MCF 10A (cell line): ENCODE measurements at regions of chr19 and their contacts with region 1.

Region 1: DNA sequence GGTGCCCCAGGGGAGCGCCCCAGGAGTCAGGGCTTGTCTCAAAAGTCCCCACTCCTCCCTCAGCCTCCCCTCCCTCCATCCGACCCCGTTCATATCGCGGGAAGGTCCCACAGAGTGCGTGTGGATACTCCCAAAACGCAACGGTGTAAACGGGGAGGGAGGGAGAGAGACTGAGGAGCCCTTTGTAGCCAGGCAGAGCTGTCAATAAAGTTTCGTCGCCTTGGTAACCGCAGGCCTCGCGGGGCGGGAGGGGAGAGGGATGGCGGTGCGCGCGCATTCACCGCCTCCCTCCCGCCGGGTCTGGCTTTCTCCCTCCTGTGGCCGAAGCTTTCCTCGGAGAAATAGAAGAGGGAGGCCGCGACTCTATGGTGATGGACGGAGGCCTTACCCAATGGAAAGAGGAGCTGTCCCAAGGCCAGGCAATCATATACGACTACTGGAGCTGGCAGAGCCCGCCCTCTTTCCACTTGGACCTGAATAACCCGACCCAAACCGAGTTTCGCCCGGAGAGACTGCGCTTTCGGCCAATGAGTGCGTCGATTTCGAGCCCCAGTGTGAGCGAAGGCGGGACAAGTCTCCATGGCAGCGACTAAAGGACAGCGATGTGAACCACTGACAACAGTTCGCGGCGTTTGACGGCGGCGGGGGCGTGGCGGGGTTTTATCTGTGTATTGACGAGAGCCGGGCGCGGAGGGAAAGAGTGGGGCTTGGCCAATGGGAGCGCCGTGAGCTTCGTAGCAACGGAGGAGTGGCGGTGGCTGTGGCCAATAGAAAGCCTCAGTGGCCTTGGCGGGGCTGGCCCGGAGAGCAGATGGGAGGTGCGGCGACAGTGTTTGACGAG is at the start of gene KMT5C:
- DNase-seq: peak; percentile 100
- H3K4me3 Mint-ChIP-seq: peak within 1 kb of the TSS; percentile 80
- H3K27ac Mint-ChIP-seq: peak within 1 kb of the TSS; percentile 100
- H3K4me1 Mint-ChIP-seq: peaks cover 33% of the 10 kb centered on the region
- H3K27me3 Mint-ChIP-seq: no peaks in the 10 kb centered on the region
- CTCF ChIP-seq: no peak
- total RNA-seq, gene KMT5C: 12.9 and 16.8 TPM in 2 replicates

Region 2: GRCh38 chr19:55289117-55289796 is 50.0 kb before region 1 on chr19:
- CTCF ChIA-PET with region 1: interaction called, 33 read pairs
- POLR2A ChIA-PET with region 1: interaction called, 13 read pairs
- intact Hi-C with region 1: no loop called
- DNase-seq: no peak
- H3K4me3 Mint-ChIP-seq: no peak overlapping the region
- H3K27ac Mint-ChIP-seq: no peak overlapping the region
- H3K4me1 Mint-ChIP-seq: peaks cover 5% of the 10 kb centered on the region
- H3K27me3 Mint-ChIP-seq: no peaks in the 10 kb centered on the region
- CTCF ChIP-seq: no peak

Region 3: GRCh38 chr19:55325172-55325571 is 14.1 kb before region 1 on chr19 and contains the start of gene TMEM150B:
- CTCF ChIA-PET with region 1: interaction called, 5 read pairs
- POLR2A ChIA-PET with region 1: interaction called, 13 read pairs
- intact Hi-C with region 1: no loop called
- DNase-seq: no peak
- H3K4me3 Mint-ChIP-seq: no peak within 1 kb of the TSS
- H3K27ac Mint-ChIP-seq: no peak within 1 kb of the TSS
- H3K4me1 Mint-ChIP-seq: peaks cover 12% of the 10 kb centered on the region
- H3K27me3 Mint-ChIP-seq: peaks cover 27% of the 10 kb centered on the region
- CTCF ChIP-seq: no peak
- total RNA-seq, gene TMEM150B: not detected in 2 replicates

Region 4: GRCh38 chr19:55369671-55370304 is 30.5 kb after region 1 on chr19:
- CTCF ChIA-PET with region 1: interaction called, 4 read pairs
- POLR2A ChIA-PET with region 1: interaction called, 10 read pairs
- intact Hi-C with region 1: no loop called
- DNase-seq: peak; percentile 56
- H3K4me3 Mint-ChIP-seq: peak overlapping the region; percentile 78
- H3K27ac Mint-ChIP-seq: no peak overlapping the region
- H3K4me1 Mint-ChIP-seq: peaks cover 22% of the 10 kb centered on the region
- H3K27me3 Mint-ChIP-seq: peaks cover 28% of the 10 kb centered on the region
- CTCF ChIP-seq: no peak

Region 5: DNA sequence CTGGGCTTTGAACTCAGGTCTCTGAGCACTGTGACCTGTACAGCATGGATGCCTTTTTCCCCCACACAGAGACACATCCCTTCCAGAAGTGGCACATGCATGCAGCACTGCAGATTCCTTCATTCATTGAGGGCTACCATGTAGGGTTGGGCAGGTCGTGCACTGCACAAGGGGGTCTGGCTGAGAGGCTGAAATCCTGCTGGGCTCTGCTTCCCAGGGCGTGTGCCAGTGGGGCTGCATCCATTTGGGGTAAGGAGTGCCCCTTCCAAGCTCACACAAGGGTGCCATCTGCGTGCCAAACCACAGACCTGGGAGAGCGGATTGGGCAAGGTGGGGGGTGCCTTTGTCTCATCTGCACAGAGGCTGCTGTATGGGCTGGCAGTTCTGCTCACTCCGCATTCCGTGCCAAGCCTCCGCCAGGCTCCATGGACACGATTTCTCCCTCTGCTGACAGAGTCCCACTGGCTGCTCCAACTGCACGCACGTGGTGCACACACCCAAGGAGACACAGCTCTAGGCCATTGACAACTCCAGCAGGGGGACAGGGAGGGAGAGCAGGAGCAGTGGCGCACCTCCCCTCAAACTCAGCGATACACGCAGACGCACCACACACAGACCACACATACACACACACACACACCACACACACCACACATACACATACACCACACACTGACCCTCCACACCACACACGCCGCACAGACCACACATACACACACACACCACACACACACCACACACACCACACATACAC is 108.3 kb after region 1 on chr19:
- CTCF ChIA-PET with region 1: no interaction called
- POLR2A ChIA-PET with region 1: interaction called, 12 read pairs
- intact Hi-C with region 1: no loop called
- DNase-seq: peak; percentile 96
- H3K4me3 Mint-ChIP-seq: no peak overlapping the region
- H3K27ac Mint-ChIP-seq: no peak overlapping the region
- H3K4me1 Mint-ChIP-seq: peaks cover 27% of the 10 kb centered on the region
- H3K27me3 Mint-ChIP-seq: peaks cover 29% of the 10 kb centered on the region
- CTCF ChIP-seq: no peak